Activated CD8-positive, alpha-beta memory T cell treated with anti-CD3 and anti-CD28 coated beads, Interleukin-2, amount 10 ng/mL, durations not matched to agents 7 days and 5 days (primary cell): ENCODE measurements at regions of chr2 and their contacts with region 1.

Region 1: DNA sequence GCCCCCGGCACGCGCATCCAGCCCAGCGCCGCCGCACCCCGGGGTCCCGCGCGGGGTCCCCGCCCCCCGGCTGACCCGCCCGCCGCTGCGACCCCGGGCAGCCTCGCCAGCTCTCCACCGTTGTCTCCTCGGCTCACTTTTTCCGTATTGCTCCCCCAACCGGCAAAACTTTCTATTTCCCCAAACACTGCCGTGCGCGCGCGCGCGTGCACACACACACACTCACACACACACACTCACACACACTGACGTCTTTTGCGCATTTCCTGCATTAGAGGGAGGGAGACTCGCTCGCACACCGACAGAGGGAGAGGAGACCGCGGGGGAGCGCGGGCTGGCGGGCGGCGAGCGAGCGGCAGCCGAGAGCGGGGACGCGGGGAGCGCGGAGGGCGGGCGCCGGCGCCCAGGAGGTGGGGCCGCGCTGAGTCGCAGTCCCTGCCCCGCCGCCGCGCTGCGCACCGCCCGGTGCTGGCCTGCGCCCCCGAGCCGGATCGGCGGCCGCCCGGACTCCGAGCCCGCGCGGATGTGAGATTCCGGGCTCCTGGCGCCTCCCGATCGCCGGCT is 542 bp upstream of the PRKCE start:
- DNase-seq: peak; percentile 94
- ATAC-seq: peak; percentile 88
- H3K4me3 Mint-ChIP-seq: peak overlapping the region; percentile 90
- H3K27ac Mint-ChIP-seq: peak overlapping the region; percentile 94
- H3K4me1 Mint-ChIP-seq: peaks cover 31% of the 10 kb centered on the region
- H3K27me3 Mint-ChIP-seq: peaks cover 13% of the 10 kb centered on the region

Region 2: DNA sequence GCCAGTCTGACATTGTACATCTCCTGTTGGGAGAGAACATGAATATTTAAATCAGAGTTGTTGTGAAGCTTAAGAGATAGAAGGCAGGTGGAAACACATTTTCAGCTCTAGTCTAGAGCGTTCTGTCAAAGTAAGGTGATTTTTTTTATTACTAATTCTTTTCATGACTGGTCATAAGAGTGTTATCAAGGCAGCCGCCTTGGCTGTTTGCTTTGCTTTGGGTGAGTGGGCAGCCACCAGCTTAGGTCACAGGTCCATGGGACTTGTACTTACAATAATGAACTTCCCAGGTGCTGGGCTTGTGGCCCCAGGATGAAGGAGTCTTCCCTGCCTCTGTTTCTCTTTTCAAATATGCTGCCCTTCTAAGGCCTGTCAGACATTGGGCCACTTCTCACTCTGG is 296.2 kb before region 1 on chr2:
- CTCF ChIA-PET with region 1: no interaction called
- DNase-seq: no peak
- ATAC-seq: no peak
- H3K4me3 Mint-ChIP-seq: no peak overlapping the region
- H3K27ac Mint-ChIP-seq: no peak overlapping the region
- H3K4me1 Mint-ChIP-seq: no peaks in the 10 kb centered on the region
- H3K27me3 Mint-ChIP-seq: peaks cover 4% of the 10 kb centered on the region

Region 3: DNA sequence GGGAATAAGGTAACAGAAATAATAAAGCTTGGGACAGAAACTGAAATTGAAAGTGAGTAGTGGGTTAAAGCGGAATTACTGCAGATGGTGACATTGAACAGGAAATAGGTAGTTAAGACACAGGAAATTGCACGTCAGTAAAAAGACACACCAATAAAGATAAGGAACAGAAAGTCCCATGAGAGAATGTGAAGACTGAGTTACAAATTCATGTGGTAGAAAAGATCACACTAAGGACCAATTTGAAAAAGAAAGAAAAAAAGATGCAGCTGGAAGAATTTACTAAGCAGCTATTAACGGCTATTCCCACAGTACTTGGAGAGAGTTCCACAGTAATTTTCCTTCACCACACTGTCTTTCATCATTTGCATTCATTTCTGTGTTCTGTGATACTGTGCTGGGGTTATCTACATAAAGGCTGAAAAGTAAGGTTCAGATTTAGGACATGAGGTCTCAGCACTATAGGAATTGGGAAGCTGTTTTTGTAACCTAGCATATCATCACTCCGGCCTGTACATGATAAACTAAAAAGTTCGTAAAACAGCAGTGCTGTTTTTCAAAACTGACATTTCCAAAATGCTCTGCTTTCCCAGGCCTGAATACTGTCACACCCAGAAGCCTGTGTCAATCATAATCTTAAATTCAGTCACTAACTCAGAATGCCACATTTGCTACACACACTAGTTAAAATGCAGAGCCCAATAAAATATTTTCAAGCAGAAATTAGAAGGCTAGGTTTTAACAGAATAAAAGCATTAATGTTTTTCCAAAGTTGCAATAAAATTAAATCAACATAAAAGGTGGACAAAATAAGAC is 82.8 kb before region 1 on chr2:
- CTCF ChIA-PET with region 1: no interaction called
- DNase-seq: no peak
- ATAC-seq: peak; percentile 98
- H3K4me3 Mint-ChIP-seq: peak overlapping the region; percentile 78
- H3K27ac Mint-ChIP-seq: peak overlapping the region; percentile 89
- H3K4me1 Mint-ChIP-seq: peaks cover 24% of the 10 kb centered on the region
- H3K27me3 Mint-ChIP-seq: no peaks in the 10 kb centered on the region

Region 4: GRCh38 chr2:45637440-45637839 is 13.5 kb before region 1 on chr2:
- CTCF ChIA-PET with region 1: interaction called, 10 read pairs
- DNase-seq: peak; percentile 75
- ATAC-seq: peak; percentile 83
- H3K4me3 Mint-ChIP-seq: no peak overlapping the region
- H3K27ac Mint-ChIP-seq: peak overlapping the region; percentile 25
- H3K4me1 Mint-ChIP-seq: peaks cover 21% of the 10 kb centered on the region
- H3K27me3 Mint-ChIP-seq: peaks cover 60% of the 10 kb centered on the region